ENCODE measurements at regions of chr1 and their contacts with region 1.

Region 1: DNA sequence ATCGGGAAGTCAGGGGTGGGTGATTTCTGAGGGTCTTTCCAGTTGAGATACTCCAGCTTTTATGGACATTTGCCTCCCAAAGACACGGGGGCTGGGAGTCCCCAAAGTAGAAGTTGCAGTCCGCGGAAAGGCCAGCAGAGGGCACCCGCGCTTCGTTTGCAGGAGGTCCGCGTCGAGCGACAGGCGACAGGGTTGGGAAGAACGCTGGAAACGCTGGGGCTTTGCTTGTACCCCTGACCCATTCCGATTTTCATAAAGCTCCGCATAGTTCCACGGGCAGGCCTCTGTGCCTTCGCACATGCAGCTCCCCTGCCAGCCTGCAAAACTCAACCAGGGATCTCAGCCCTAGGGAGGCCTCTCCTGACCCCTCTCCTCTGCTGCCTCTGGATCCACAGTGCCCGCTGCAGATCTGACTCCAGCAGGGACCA is 44.2 kb upstream of the LAPTM5 start:
- DNase-seq: peak; percentile 86
- H3K4me3 ChIP-seq: peak overlapping the region in 1 of 2 experiments; percentile 38; a peak in 1 of 4 replicates
- H3K27ac ChIP-seq: no peak overlapping the region
- H3K4me1 ChIP-seq: peaks cover 12 to 15% of the 10 kb centered on the region in 2 experiments; a peak in 3 of 4 replicates
- H3K27me3 ChIP-seq: no peaks in the 10 kb centered on the region
- CTCF ChIP-seq: peak; percentile 96
- EP300 ChIP-seq: no peak
- RAD21 ChIP-seq: peak; percentile 97

Region 2: DNA sequence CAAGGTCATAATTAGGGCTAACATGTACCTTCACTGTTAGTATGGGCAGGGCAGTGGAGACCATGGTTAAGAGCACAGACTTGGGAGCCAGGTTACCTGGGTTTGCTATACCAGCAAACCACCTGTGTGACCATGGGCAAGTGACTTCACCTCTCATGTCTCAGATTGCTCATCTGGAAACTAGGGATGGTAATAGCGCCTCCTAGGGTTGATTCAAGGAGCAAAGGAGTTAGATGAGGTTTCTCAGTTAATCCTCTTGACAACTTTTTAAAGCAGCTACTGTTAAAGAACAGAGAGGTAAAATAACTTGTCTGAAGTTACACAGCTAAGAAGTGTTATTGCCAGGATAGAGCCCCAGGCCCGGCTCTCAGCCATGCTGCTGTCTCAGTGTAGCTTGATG is 77.6 kb before region 1 on chr1:
- CTCF ChIA-PET with region 1: interaction called, 61 read pairs
- POLR2A ChIA-PET with region 1: no interaction called
- DNase-seq: no peak
- H3K4me3 ChIP-seq: no peak overlapping the region
- H3K27ac ChIP-seq: no peak overlapping the region
- H3K4me1 ChIP-seq: peaks cover 9% of the 10 kb centered on the region in 2 experiments; a peak in 3 of 4 replicates
- H3K27me3 ChIP-seq: no peaks in the 10 kb centered on the region
- CTCF ChIP-seq: peak; percentile 50
- EP300 ChIP-seq: no peak
- RAD21 ChIP-seq: no peak

Region 3: DNA sequence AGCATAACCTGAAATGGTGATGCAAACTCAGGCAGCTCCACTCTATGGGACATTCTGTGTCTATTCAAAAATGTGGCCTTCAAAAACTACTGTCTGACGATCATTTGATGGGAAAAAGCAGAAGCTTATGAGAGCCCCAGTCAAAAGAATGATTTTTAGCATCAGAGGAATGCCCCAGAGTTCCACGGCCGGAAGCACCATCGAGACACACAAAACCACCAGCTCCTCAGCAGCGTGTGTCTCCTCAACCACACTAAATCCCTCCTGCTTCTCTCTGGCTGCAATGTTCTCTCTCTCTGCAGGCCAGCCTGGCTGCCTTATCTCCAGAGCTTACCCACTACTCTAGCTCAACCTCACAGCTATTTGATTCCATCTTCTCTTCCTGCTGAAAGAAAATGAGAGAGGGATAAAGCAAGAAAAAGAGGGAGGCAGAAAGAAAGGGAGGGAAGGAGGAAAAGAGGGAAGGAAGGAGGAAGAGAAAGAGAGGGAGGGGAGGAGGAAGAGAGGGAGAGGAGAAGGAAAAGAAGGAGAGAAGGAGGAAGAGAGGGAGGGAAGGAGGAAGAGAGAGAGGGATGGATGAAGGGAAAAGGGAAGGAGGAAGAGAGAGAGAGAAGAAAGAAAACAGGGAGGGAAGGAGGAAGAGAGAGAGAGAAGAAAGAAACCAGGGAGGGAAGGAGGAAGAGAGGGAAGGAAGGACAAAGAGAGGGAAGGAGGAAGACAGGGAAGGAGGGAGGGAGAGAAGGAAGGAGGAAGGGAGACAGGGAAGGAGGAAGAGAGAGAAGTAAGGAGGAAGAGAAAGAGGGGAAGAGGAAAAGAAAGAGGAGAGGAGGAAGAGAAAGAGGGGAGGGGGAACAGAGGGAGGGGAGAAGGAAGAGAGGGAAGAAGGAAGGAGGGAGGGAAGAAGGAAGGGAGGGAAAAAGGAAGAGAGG is 10.7 kb before region 1 on chr1:
- CTCF ChIA-PET with region 1: interaction called, 356 read pairs
- POLR2A ChIA-PET with region 1: no interaction called
- DNase-seq: no peak
- H3K4me3 ChIP-seq: no peak overlapping the region
- H3K27ac ChIP-seq: no peak overlapping the region
- H3K4me1 ChIP-seq: no peaks in the 10 kb centered on the region
- H3K27me3 ChIP-seq: no peaks in the 10 kb centered on the region; the same call in 1 of the 2 replicates
- CTCF ChIP-seq: no peak
- EP300 ChIP-seq: no peak
- RAD21 ChIP-seq: no peak

Region 4: GRCh38 chr1:30830537-30830936 is 28.8 kb after region 1 on chr1:
- CTCF ChIA-PET with region 1: interaction called, 17 read pairs
- POLR2A ChIA-PET with region 1: no interaction called
- DNase-seq: no peak
- H3K4me3 ChIP-seq: no peak overlapping the region
- H3K27ac ChIP-seq: no peak overlapping the region
- H3K4me1 ChIP-seq: no peaks in the 10 kb centered on the region; a peak in 1 of 4 replicates
- H3K27me3 ChIP-seq: no peaks in the 10 kb centered on the region
- CTCF ChIP-seq: no peak
- EP300 ChIP-seq: no peak
- RAD21 ChIP-seq: no peak

Region 5: DNA sequence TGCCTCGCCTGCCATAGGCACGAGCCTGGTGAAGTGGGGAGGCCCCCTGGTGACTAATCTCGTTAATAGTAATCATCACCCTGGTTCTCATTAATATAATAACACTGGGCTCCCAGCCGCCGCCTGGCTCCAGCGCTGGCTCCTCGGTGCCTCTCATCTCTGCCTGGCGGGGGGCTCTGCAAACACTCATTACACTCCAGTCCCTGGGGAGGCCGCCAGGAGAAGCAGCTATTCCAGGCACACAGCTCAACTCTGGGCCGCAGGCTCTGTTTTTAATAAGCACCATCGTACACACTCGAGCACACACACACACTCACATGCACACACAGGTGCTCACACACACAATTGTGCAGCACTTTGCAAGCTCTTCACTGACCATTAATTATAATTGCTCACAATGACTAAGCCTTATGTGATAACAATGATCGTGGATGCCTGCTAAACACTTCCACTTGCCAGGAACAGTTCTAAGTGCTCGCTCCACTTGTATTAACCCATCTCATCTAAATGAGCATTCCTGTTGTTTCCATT is 54.5 kb after region 1 on chr1:
- CTCF ChIA-PET with region 1: interaction called, 20 read pairs
- POLR2A ChIA-PET with region 1: no interaction called
- DNase-seq: peak; percentile 68
- H3K4me3 ChIP-seq: no peak overlapping the region
- H3K27ac ChIP-seq: peak overlapping the region in 1 of 2 experiments; percentile 26; a peak in 1 of 4 replicates
- H3K4me1 ChIP-seq: peaks cover 8 to 47% of the 10 kb centered on the region in 2 experiments; a peak in 2 of 4 replicates
- H3K27me3 ChIP-seq: no peaks in the 10 kb centered on the region
- CTCF ChIP-seq: 0 out of 2 replicates have a peak, but pooled peaks have one; percentile 8
- EP300 ChIP-seq: no peak
- RAD21 ChIP-seq: no peak

Region 6: DNA sequence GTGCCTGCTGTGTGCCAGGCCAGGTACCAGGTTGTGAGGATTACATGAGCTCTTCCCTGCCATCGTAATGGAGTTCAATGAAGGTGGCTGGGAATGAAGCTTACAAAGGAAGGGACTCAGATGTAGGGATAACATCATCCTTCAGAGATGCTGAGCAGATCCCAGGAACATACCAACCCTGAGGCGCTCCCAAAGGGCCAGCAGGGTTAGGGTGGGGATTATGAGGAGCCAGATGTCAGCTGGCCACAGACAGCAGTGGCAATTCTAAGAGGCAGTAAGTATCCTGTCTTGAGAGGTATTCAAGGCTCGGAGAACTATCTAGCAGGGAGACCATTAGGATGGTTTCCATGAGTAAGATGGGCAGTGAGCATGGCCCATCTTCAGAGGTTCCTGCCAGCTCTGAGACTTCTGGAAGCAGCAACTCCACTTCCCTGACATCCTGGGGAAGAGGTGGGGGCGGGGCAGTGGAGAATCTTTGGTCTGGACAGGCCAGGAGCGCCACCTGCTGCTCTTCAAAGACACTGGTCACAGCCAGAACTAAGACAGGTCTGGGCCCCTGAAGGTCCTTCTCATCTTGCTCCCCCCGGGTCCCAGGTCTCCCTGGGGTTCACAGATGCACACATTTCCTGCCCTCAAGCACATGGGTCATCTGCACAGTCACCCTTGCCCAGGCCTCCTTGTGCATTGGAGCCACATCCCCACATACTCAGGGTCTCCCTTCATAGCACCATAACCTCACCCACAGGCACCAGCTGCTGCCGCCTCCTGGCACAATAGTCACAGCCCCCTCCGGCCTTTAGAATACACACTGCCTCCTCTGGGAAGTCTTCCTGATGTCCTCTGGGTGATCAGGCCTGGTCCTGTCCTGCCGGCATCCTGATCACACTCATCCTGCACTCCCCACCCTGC is 109.5 kb after region 1 on chr1:
- CTCF ChIA-PET with region 1: interaction called, 1,422 read pairs
- POLR2A ChIA-PET with region 1: interaction called, 10 read pairs
- DNase-seq: peak; percentile 88
- H3K4me3 ChIP-seq: no peak overlapping the region; a peak in 1 of 4 replicates
- H3K27ac ChIP-seq: no peak overlapping the region
- H3K4me1 ChIP-seq: peaks cover 4 to 22% of the 10 kb centered on the region in 2 experiments; a peak in 2 of 4 replicates
- H3K27me3 ChIP-seq: no peaks in the 10 kb centered on the region
- CTCF ChIP-seq: peak; percentile 87
- EP300 ChIP-seq: no peak
- RAD21 ChIP-seq: peak; percentile 98

Region 7: GRCh38 chr1:30976143-30976542 is 174.4 kb after region 1 on chr1:
- CTCF ChIA-PET with region 1: interaction called, 10 read pairs
- POLR2A ChIA-PET with region 1: no interaction called
- DNase-seq: no peak
- H3K4me3 ChIP-seq: no peak overlapping the region
- H3K27ac ChIP-seq: peak overlapping the region; percentile 47 to 64; a peak in 3 of 4 replicates
- H3K4me1 ChIP-seq: peaks cover 6 to 17% of the 10 kb centered on the region in 2 experiments
- H3K27me3 ChIP-seq: no peaks in the 10 kb centered on the region
- CTCF ChIP-seq: no peak
- EP300 ChIP-seq: peak in 1 of 2 experiments; percentile 38; a peak in 1 of 4 replicates
- RAD21 ChIP-seq: no peak